MCF 10A (cell line): ENCODE measurements at regions of chr20 and their contacts with region 1.

Region 1: GRCh38 chr20:45880988-45881788 is at the start of gene ZSWIM1:
- DNase-seq: peak; percentile 99
- H3K4me3 Mint-ChIP-seq: peak within 1 kb of the TSS; percentile 97
- H3K27ac Mint-ChIP-seq: peak within 1 kb of the TSS; percentile 97
- H3K4me1 Mint-ChIP-seq: peaks cover 21% of the 10 kb centered on the region
- H3K27me3 Mint-ChIP-seq: no peaks in the 10 kb centered on the region
- CTCF ChIP-seq: no peak
- total RNA-seq, gene ZSWIM1: 7.6 and 10.3 TPM in 2 replicates

Region 2: DNA sequence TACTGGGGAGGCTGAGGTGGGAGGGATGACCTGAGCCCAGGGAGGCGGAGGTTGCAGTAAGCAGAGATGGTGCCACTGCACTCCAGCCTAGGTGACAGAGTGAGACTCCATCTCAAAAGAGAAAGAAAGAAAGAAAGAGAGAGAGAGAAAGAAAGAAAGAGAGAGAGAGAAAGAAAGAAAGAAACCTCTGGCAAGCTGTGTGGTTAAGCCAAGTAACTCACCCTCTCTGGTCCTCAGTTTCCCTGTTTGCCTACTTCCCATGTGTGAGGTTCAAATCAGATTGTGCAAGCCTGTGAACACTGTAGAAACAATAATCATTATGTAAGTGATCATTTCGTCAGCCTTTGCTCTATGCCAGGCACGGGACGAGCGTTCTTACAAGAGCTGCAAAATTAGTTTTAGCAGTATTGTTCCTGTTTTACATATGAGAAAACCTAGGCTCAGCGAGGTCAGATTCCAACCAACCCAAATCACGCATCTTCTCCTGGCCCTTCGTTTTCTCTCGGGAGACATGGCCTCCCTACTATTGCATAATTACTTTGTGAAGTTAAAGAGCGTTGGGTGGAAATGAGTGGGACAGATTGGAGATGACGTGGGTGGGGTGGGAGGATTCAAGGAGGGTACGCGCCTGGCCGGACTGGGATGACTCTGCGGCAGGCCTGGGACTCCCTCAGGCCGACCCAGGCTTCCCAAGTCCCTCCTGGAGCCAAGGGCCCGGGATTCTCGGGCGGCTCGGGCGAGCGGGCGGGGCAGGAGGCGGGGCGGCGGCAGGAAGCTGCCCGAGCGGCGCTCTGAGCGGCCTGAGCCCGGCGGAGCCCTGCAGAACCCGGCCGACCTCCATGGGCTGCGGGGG is 47.9 kb before region 1 on chr20 and contains the start of gene SNX21:
- CTCF ChIA-PET with region 1: no interaction called
- POLR2A ChIA-PET with region 1: interaction called, 27 read pairs
- intact Hi-C with region 1: loop called (anchors 10 kb)
- DNase-seq: peak; percentile 83
- H3K4me3 Mint-ChIP-seq: peak within 1 kb of the TSS; percentile 80
- H3K27ac Mint-ChIP-seq: peak within 1 kb of the TSS; percentile 84
- H3K4me1 Mint-ChIP-seq: peaks cover 26% of the 10 kb centered on the region
- H3K27me3 Mint-ChIP-seq: no peaks in the 10 kb centered on the region
- CTCF ChIP-seq: no peak
- total RNA-seq, gene SNX21: 8.5 and 13.9 TPM in 2 replicates

Region 3: GRCh38 chr20:45857114-45857881 is 23.9 kb before region 1 on chr20 and contains the starts of genes ACOT8 and ZSWIM3:
- CTCF ChIA-PET with region 1: interaction called, 4 read pairs
- POLR2A ChIA-PET with region 1: interaction called, 40 read pairs
- intact Hi-C with region 1: no loop called
- DNase-seq: peak; percentile 100
- H3K4me3 Mint-ChIP-seq: peak within 1 kb of the TSS; percentile 92
- H3K27ac Mint-ChIP-seq: peak within 1 kb of the TSS; percentile 92
- H3K4me1 Mint-ChIP-seq: peaks cover 16% of the 10 kb centered on the region
- H3K27me3 Mint-ChIP-seq: no peaks in the 10 kb centered on the region
- CTCF ChIP-seq: no peak
- total RNA-seq, gene ACOT8: 19.5 and 20.1 TPM in 2 replicates
- total RNA-seq, gene ZSWIM3: 1.4 and 2.4 TPM in 2 replicates

Region 4: GRCh38 chr20:45867819-45868176 is 13.4 kb before region 1 on chr20:
- CTCF ChIA-PET with region 1: interaction called, 4 read pairs
- POLR2A ChIA-PET with region 1: interaction called, 27 read pairs
- intact Hi-C with region 1: no loop called
- DNase-seq: no peak
- H3K4me3 Mint-ChIP-seq: no peak overlapping the region
- H3K27ac Mint-ChIP-seq: no peak overlapping the region
- H3K4me1 Mint-ChIP-seq: peaks cover 6% of the 10 kb centered on the region
- H3K27me3 Mint-ChIP-seq: no peaks in the 10 kb centered on the region
- CTCF ChIP-seq: no peak

Region 5: GRCh38 chr20:45890985-45891983 is 10.1 kb after region 1 on chr20 and contains the starts of genes CTSA and NEURL2:
- CTCF ChIA-PET with region 1: interaction called, 15 read pairs
- POLR2A ChIA-PET with region 1: interaction called, 74 read pairs
- intact Hi-C with region 1: no loop called
- DNase-seq: peak; percentile 89
- H3K4me3 Mint-ChIP-seq: peak within 1 kb of the TSS; percentile 95
- H3K27ac Mint-ChIP-seq: peak within 1 kb of the TSS; percentile 86
- H3K4me1 Mint-ChIP-seq: peaks cover 6% of the 10 kb centered on the region
- H3K27me3 Mint-ChIP-seq: no peaks in the 10 kb centered on the region
- CTCF ChIP-seq: no peak
- total RNA-seq, gene CTSA: 25.3 and 39.1 TPM in 2 replicates
- total RNA-seq, gene NEURL2: 2.0 and 2.5 TPM in 2 replicates

Region 6: DNA sequence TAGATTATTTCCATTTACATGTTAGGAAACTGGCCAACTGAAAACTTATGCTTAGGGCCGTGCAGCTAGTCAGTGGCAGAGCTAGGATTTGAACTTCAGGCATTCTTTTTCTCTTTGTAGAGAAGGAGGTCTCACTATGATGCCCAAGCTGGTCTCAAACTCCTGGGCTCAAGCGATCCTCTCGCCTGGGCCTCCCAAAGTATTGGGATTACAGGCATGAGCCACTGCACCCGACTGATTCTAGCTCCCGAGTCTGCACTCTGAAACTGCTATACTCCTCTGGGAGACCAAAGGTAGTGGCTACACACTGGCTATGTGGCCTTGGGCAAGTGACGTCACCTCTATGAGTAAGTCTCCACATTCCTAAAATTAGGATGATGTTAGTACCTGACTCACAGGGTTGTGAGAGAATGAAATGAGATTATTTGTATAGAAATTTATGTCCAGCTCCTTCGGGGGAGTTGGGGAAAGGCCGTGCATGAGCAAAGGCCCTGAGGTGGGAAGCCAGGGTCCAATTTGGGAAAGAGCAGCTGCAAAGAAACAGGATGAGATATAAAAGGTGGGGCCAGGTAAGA is 24.4 kb after region 1 on chr20:
- CTCF ChIA-PET with region 1: interaction called, 4 read pairs
- POLR2A ChIA-PET with region 1: interaction called, 17 read pairs
- intact Hi-C with region 1: no loop called
- DNase-seq: peak; percentile 91
- H3K4me3 Mint-ChIP-seq: peak overlapping the region; percentile 2
- H3K27ac Mint-ChIP-seq: peak overlapping the region; percentile 55
- H3K4me1 Mint-ChIP-seq: peaks cover 9% of the 10 kb centered on the region
- H3K27me3 Mint-ChIP-seq: no peaks in the 10 kb centered on the region
- CTCF ChIP-seq: no peak

Region 7: GRCh38 chr20:45946149-45946970 is 65.2 kb after region 1 on chr20:
- CTCF ChIA-PET with region 1: no interaction called
- POLR2A ChIA-PET with region 1: interaction called, 10 read pairs
- intact Hi-C with region 1: no loop called
- DNase-seq: peak; percentile 74
- H3K4me3 Mint-ChIP-seq: peak overlapping the region; percentile 21
- H3K27ac Mint-ChIP-seq: peak overlapping the region; percentile 85
- H3K4me1 Mint-ChIP-seq: peaks cover 24% of the 10 kb centered on the region
- H3K27me3 Mint-ChIP-seq: no peaks in the 10 kb centered on the region
- CTCF ChIP-seq: no peak